ENCODE measurements at regions of chr4 and their contacts with region 1.

Region 1: GRCh38 chr4:165537028-165537648 is 158.3 kb downstream of the CPE start:
- DNase-seq: peak; percentile 81
- H3K4me3 ChIP-seq: no peak overlapping the region
- H3K27ac ChIP-seq: no peak overlapping the region
- H3K4me1 ChIP-seq: peaks cover 6% of the 10 kb centered on the region
- H3K27me3 ChIP-seq: no peaks in the 10 kb centered on the region
- CTCF ChIP-seq: peak; percentile 69

Region 2: DNA sequence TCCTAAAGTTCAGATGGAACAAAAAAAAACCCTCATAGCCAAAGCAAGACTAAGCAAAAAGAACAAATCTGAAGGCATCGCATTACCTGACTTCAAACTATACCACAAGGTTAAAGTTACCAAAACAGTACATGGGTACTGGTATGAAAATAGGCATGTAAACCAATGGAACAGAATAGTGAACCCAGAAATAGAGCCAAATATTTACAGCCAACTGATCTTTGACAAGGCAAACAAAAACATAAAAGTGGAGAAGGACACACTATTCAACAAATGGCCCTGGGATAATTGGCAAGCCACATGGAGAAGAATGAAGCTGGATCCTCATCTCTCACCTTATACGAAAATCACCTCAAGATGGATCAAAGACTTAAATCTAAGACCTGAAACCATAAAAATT is 380.2 kb before region 1 on chr4:
- CTCF ChIA-PET with region 1: no interaction called
- POLR2A ChIA-PET with region 1: no interaction called
- intact Hi-C with region 1: no loop called
- DNase-seq: no peak
- H3K4me3 ChIP-seq: no peak overlapping the region
- H3K27ac ChIP-seq: no peak overlapping the region
- H3K4me1 ChIP-seq: no peaks in the 10 kb centered on the region
- H3K27me3 ChIP-seq: peaks cover 4% of the 10 kb centered on the region
- CTCF ChIP-seq: no peak

Region 3: DNA sequence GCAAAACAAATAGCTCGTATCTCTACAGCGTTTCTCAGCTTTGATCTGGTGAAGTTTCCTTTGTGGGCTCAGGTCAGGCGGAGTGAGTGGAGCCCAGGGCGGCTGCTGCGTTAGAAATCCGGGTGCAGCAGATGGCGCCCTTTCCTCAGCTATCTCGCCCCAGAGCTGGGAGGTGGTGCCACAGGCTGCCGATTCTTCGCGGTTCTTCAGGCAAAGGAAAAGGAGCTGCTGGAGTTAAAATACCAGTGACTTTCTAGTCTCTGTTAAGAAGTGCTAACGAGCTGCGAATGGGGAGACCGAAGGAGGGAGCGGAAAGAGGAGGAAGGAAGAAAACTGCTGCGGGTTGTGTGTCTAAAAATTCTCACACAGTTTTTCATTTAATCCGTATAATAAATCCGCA is 43.8 kb before region 1 on chr4:
- CTCF ChIA-PET with region 1: interaction called, 5 read pairs
- POLR2A ChIA-PET with region 1: no interaction called
- intact Hi-C with region 1: loop called (anchors 1 kb)
- DNase-seq: peak; percentile 88
- H3K4me3 ChIP-seq: no peak overlapping the region
- H3K27ac ChIP-seq: no peak overlapping the region
- H3K4me1 ChIP-seq: peaks cover 8% of the 10 kb centered on the region
- H3K27me3 ChIP-seq: no peaks in the 10 kb centered on the region
- CTCF ChIP-seq: peak; percentile 92

Region 4: DNA sequence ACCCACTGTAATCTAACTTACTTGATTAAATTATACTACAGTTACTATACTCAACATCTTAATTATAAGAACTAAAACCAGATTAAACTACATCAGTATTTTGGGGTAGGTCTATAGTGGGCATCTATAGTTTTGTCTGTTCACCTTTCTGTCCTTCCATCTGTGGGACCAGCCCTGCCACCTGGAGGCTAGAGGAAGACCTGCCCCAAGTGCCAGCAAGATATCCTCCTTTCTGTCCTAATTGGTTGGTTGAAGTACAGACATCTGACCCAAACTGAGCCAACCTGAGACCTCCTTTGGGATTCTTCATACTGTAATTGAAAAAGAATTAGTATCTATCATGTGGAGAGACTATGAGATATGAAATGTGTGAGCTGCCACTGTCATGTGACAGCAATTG is 163.7 kb after region 1 on chr4:
- CTCF ChIA-PET with region 1: no interaction called
- POLR2A ChIA-PET with region 1: no interaction called
- intact Hi-C with region 1: loop called (anchors 5 kb)
- DNase-seq: no peak
- H3K4me3 ChIP-seq: no peak overlapping the region
- H3K27ac ChIP-seq: no peak overlapping the region
- H3K4me1 ChIP-seq: peaks cover 6% of the 10 kb centered on the region
- H3K27me3 ChIP-seq: no peaks in the 10 kb centered on the region
- CTCF ChIP-seq: peak; percentile 45; the same call in 1 of the 2 replicates

Region 5: DNA sequence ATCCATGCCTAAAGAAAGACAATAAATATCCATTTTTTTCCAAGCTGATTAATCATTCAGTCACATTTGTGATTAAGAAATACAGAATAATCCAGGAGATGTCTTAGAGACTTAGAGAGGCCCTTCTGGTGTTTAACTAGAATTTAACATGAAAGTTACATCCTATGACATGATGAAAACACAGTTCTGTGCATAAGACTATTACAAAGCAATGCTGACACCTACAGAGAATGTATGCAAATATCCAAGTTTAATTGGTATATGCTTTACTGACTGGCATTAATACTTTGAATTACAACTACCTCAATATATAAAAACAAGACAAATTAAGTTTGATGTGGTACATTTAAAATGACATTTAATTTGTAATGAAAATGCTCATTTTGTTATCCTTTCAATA is 318.1 kb after region 1 on chr4:
- CTCF ChIA-PET with region 1: no interaction called
- POLR2A ChIA-PET with region 1: no interaction called
- intact Hi-C with region 1: loop called (anchors 5 kb)
- DNase-seq: no peak
- H3K4me3 ChIP-seq: no peak overlapping the region
- H3K27ac ChIP-seq: no peak overlapping the region
- H3K4me1 ChIP-seq: peaks cover 11% of the 10 kb centered on the region
- H3K27me3 ChIP-seq: no peaks in the 10 kb centered on the region
- CTCF ChIP-seq: no peak; the same call in 1 of the 2 replicates

Region 6: DNA sequence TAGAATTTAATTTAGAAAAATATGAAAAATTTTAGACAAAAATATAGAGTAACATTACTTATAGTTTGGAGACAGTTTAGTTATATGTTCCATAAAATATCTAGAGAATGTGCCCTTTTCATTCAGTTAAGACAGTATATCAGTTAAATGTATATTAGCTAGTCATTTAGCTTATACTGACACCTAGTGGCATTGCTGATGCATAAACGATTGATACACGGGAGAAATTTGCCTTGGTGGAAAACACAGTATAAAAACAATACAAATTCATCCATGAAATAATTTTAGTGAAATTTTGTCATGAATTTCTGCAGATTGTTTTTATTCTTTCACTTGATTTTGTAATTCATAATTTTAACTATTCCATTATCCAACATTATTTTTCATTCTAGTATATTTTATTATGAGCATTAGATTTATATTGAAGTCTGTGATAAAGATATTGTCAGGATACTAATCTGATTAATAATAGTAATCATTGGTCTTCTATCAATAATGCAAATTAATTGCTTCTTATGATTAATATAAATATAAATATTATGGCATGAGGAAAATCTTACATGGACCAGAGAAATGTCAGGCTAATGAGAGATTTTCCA is 554.9 kb after region 1 on chr4:
- CTCF ChIA-PET with region 1: interaction called, 6 read pairs
- POLR2A ChIA-PET with region 1: no interaction called
- intact Hi-C with region 1: loop called (anchors 1 kb)
- DNase-seq: peak; percentile 59
- H3K4me3 ChIP-seq: no peak overlapping the region
- H3K27ac ChIP-seq: no peak overlapping the region
- H3K4me1 ChIP-seq: peaks cover 10% of the 10 kb centered on the region
- H3K27me3 ChIP-seq: no peaks in the 10 kb centered on the region
- CTCF ChIP-seq: peak; percentile 80

Region 7: DNA sequence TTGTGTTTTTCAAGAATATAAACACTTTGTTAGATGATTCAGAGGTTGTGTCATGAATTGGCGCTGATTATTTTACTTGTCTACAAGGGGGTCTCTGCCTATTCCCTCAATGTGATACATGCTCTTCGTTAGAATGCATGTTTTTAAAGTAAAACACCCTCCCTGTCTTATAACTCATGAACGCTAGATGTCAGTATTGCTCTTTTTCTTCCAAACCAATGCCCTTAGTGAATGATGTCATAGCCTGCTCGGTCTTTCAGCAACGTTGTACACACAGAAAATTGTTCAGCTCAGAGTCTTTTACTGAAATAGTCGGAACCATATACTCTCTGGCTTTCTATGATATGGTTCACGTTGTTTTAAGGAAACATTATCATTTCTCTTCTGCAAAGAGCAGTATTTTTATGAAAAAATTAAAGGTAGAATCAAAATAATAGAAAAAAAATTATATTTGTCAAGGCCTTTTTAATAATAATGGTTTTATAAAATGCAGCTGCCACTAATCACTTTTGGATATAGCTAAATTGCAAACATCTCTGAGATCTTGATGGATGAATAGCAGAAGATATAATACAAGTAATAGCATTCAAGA is 628.8 kb after region 1 on chr4:
- CTCF ChIA-PET with region 1: no interaction called
- POLR2A ChIA-PET with region 1: no interaction called
- intact Hi-C with region 1: loop called (anchors 5 kb)
- DNase-seq: peak; percentile 87
- H3K4me3 ChIP-seq: no peak overlapping the region
- H3K27ac ChIP-seq: no peak overlapping the region
- H3K4me1 ChIP-seq: no peaks in the 10 kb centered on the region
- H3K27me3 ChIP-seq: no peaks in the 10 kb centered on the region
- CTCF ChIP-seq: peak; percentile 74

Region 8: GRCh38 chr4:166252487-166253402 is 715.6 kb after region 1 on chr4:
- CTCF ChIA-PET with region 1: no interaction called
- POLR2A ChIA-PET with region 1: no interaction called
- intact Hi-C with region 1: loop called (anchors 5 kb)
- DNase-seq: peak; percentile 44
- H3K4me3 ChIP-seq: no peak overlapping the region
- H3K27ac ChIP-seq: no peak overlapping the region
- H3K4me1 ChIP-seq: no peaks in the 10 kb centered on the region
- H3K27me3 ChIP-seq: no peaks in the 10 kb centered on the region
- CTCF ChIP-seq: peak; percentile 62